Head of caudate nucleus (tissue), 42 donors: ENCODE measurements at regions of chr11 and their contacts with region 1.

Region 1: GRCh38 chr11:6682936-6683861 is at the start of gene MRPL17:
- DNase-seq: peak; percentile 95 to 99 (median 98)

Region 2: DNA sequence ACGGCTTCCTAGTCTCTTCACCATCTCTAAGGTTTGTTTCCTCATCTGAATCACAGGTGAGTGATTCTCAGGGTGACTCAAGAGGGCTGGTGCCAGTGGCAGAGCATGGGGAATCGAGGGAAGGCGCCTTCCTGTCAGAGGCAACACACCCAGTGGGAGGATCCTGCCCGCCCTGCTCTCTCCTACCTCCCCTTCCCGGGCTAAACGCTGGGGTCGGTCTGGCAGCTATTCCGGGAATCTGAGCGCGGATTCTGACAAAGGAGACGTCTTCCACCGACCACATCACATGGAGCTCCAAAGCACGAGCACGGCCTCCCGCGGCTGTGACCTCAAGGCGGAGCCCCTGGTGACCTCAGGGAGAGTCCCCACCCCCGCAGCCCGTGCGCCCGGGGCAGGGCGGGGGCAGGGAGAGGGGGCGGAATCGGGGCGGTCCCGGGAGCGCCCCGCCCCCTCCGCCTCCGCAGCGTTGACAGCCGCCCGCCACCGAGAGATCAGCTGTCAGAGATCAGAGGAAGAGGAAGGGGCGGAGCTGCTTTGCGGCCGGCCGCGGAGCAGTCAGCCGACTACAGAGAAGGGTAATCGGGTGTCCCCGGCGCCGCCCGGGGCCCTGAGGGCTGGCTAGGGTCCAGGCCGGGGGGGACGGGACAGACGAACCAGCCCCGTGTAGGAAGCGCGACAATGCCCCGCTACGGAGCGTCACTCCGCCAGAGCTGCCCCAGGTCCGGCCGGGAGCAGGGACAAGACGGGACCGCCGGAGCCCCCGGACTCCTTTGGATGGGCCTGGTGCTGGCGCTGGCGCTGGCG is 293.1 kb before region 1 on chr11 and contains the start of gene SMPD1:
- intact Hi-C with region 1: loop called (anchors 10 kb)
- DNase-seq: peak; percentile 88 to 97 (median 94)

Region 3: GRCh38 chr11:6531267-6531752 is 151.9 kb before region 1 on chr11:
- intact Hi-C with region 1: loop called (anchors 2 kb)
- DNase-seq: peak in 18 of 42 donors; percentile 14 to 76 (median 41)

Region 4: DNA sequence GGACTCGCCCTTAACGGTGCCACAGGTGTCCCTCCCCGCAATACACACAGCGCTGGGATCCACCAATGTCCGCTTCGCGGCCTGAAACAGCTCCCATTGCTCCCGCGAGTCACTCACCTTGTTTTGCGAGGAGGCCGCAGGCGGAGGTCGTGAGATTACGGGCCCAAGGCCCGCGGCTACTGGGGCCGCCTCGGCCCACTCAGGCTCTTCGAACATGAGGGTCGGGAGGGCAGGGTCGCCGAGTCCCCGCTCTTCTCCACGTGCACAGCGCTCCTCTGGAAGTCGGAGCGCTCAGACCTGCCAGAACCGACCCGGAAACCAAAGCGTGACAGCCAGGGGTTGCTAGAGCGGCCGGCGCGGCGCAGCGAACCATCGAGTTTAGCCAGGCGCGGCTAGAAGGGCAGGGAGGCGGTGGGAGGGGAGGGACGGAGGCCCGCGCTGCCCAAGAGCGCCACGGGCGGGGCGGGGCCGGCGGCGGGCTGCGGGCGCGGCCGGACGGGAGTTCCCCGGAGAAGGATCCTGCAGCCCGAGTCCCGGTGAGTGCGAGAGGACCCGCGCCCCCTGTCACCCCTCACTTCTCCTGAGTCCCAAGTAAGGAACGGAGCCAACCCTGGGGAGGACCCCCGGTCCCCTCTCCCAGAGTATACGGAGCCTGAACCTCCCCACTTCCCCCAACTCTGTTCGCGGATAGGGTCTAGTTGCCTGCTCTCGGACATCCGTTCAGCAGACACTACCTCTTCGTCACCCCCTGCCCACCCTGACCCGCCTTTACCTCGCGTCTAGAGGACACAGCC is 79.7 kb before region 1 on chr11 and contains the starts of genes ILK and RRP8:
- intact Hi-C with region 1: loop called (anchors 2 kb)
- DNase-seq: peak; percentile 76 to 97 (median 93)

Region 5: GRCh38 chr11:6611092-6611962 is 71.9 kb before region 1 on chr11:
- intact Hi-C with region 1: loop called (anchors 2 kb)
- DNase-seq: peak in 29 of 42 donors; percentile 26 to 71 (median 46)

Region 6: DNA sequence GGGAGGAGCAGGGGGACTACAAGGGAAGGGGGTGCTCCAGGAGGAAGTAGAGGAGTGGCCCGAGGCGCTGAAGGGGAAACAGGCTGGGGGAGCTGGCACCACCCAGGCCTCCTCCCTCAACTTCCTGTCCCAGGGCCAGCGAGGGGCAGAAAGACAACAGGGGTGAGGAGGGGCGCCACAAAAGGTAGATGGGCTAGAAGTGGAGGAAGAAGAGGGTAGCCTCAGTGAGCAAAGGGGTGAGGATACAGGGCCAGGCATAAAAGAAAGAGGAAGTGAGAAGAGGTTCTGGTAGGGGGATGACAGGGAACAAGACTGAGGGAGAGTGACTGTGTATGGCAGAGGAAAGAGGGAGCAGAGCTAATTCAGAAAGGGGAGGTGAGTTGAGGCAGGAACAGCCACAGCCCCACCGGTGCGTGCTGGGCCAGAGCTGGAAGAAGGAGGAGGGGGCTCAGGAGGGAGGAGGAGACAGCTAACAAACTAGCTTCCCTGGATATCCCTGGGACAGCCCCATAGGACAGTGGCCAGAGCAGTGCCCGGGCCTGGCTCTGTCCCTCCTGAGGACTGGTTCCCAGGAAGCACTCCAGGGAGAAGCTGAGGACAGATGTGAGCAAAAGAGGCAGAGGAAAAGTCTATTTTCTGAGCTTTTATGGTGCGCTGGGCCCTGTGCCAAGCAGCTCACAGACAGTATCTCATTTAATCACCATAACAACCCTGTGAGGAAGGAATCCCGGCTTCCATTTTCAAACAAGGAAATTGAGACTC is 36.1 kb before region 1 on chr11:
- intact Hi-C with region 1: no loop called
- DNase-seq: peak in 2 of 42 donors; percentile 36 to 39